T-cell (primary cell): ENCODE measurements at regions of chr15 and their contacts with region 1.

Region 1: GRCh38 chr15:47386459-47386858 is 330.8 kb upstream of the SEMA6D start:
- DNase-seq: no peak
- ATAC-seq: no peak
- H3K4me3 ChIP-seq: no peak overlapping the region
- H3K4me3 Mint-ChIP-seq: no peak overlapping the region
- H3K27ac ChIP-seq: no peak overlapping the region
- H3K27ac Mint-ChIP-seq: no peak overlapping the region
- H3K4me1 ChIP-seq: no peaks in the 10 kb centered on the region
- H3K4me1 Mint-ChIP-seq: no peaks in the 10 kb centered on the region
- H3K27me3 ChIP-seq: no peaks in the 10 kb centered on the region
- H3K27me3 Mint-ChIP-seq: no peaks in the 10 kb centered on the region

Region 2: GRCh38 chr15:47312161-47312560 is 74.3 kb before region 1 on chr15:
- CTCF ChIA-PET with region 1: interaction called in 1 of 2 experiments, 11 read pairs
- POLR2A ChIA-PET with region 1: no interaction called
- DNase-seq: no peak
- ATAC-seq: no peak
- H3K4me3 ChIP-seq: no peak overlapping the region
- H3K4me3 Mint-ChIP-seq: no peak overlapping the region
- H3K27ac ChIP-seq: no peak overlapping the region
- H3K27ac Mint-ChIP-seq: no peak overlapping the region
- H3K4me1 ChIP-seq: no peaks in the 10 kb centered on the region
- H3K4me1 Mint-ChIP-seq: no peaks in the 10 kb centered on the region
- H3K27me3 ChIP-seq: no peaks in the 10 kb centered on the region
- H3K27me3 Mint-ChIP-seq: no peaks in the 10 kb centered on the region

Region 3: DNA sequence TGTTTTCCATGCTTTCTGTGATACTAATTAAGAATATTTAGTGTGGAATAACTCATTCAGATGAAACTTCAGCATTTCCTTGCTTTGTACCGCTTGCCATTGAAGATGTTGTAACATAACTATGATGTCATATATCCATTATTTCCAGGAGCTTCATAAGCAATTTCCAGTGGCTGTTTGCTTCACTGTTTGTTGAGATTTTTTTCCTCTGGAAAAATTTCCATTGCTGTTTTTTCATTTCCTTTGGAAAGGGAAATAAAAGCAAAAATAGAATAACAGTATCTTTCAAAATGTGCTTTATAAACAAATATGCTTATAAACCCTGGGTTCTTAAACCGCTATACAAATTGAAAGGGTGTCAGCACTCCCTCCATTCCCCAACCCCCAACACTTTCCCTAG is 11.2 kb after region 1 on chr15:
- CTCF ChIA-PET with region 1: no interaction called
- POLR2A ChIA-PET with region 1: no interaction called
- DNase-seq: no peak
- ATAC-seq: no peak
- H3K4me3 ChIP-seq: no peak overlapping the region
- H3K4me3 Mint-ChIP-seq: no peak overlapping the region
- H3K27ac ChIP-seq: no peak overlapping the region
- H3K27ac Mint-ChIP-seq: no peak overlapping the region
- H3K4me1 ChIP-seq: no peaks in the 10 kb centered on the region
- H3K4me1 Mint-ChIP-seq: no peaks in the 10 kb centered on the region
- H3K27me3 ChIP-seq: no peaks in the 10 kb centered on the region
- H3K27me3 Mint-ChIP-seq: peaks cover 0 to 6% of the 10 kb centered on the region in 2 donors

Region 4: GRCh38 chr15:47422901-47423665 is 36.6 kb after region 1 on chr15:
- CTCF ChIA-PET with region 1: no interaction called
- POLR2A ChIA-PET with region 1: no interaction called
- DNase-seq: no peak
- ATAC-seq: no peak
- H3K4me3 ChIP-seq: no peak overlapping the region
- H3K4me3 Mint-ChIP-seq: no peak overlapping the region
- H3K27ac ChIP-seq: no peak overlapping the region
- H3K27ac Mint-ChIP-seq: no peak overlapping the region
- H3K4me1 ChIP-seq: no peaks in the 10 kb centered on the region
- H3K4me1 Mint-ChIP-seq: no peaks in the 10 kb centered on the region
- H3K27me3 ChIP-seq: no peaks in the 10 kb centered on the region
- H3K27me3 Mint-ChIP-seq: no peaks in the 10 kb centered on the region